ENCODE measurements at regions of chr6 and their contacts with region 1.

Region 1: GRCh38 chr6:154276810-154277628 is 79.6 kb downstream of the IPCEF1 start:
- DNase-seq: peak in 2 of 5 donors; percentile 52 to 57
- H3K4me3 ChIP-seq: peak overlapping the region; percentile 30
- H3K4me3 Mint-ChIP-seq: peak overlapping the region; percentile 54 to 81 (median 76)
- H3K27ac ChIP-seq: no peak overlapping the region
- H3K27ac Mint-ChIP-seq: peak overlapping the region in 6 of 8 donors; percentile 26 to 76 (median 57)
- H3K4me1 ChIP-seq: peaks cover 15% of the 10 kb centered on the region
- H3K4me1 Mint-ChIP-seq: peaks cover 22 to 35% (median 27%) of the 10 kb centered on the region in 3 donors
- H3K27me3 ChIP-seq: no peaks in the 10 kb centered on the region
- H3K27me3 Mint-ChIP-seq: no peaks in the 10 kb centered on the region

Region 2: DNA sequence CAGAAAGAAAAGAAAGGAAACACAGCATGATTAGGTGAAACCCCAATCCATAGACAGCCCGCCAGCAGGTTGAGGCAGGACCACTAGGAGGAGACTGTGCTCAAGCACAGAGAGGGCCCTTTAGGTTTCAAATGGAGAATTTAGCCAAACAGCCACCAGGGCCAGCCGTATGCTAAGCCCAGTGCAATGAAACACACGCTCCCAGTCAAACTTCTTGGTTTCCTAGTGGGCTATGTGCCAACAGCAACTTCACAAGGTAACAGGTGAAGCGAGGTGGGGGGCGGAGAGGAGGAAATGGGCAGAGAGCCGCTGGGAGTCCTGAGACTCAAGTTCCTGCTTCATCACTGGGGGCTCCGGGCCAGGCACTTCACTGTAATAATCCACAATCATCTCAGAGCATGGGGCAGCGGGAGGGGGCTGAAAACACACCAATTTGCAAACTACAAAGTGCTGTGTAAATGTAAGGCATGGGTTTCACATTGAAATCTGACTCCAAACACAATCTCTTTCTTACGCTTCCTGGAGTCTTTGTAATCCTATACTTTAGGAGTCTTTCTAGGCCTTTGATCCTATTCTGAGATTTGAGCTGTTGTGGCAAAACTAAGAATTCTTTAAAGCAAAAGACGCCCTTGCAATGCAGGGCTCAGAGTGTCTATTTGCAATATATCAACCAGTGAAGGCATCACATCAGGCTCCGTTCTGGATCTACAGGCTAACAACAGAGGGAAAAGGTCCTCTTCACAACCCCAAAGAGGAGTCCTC is 120.7 kb before region 1 on chr6:
- CTCF ChIA-PET with region 1: interaction called, 69 read pairs
- POLR2A ChIA-PET with region 1: interaction called, 6 read pairs
- DNase-seq: peak; percentile 36 to 75 (median 43)
- H3K4me3 ChIP-seq: peak overlapping the region; percentile 61
- H3K4me3 Mint-ChIP-seq: peak overlapping the region; percentile 66 to 91 (median 84)
- H3K27ac ChIP-seq: no peak overlapping the region
- H3K27ac Mint-ChIP-seq: peak overlapping the region; percentile 83 to 98 (median 92)
- H3K4me1 ChIP-seq: peaks cover 40% of the 10 kb centered on the region
- H3K4me1 Mint-ChIP-seq: peaks cover 57 to 65% (median 63%) of the 10 kb centered on the region in 3 donors
- H3K27me3 ChIP-seq: no peaks in the 10 kb centered on the region
- H3K27me3 Mint-ChIP-seq: no peaks in the 10 kb centered on the region

Region 3: GRCh38 chr6:154164397-154165165 is 112.4 kb before region 1 on chr6:
- CTCF ChIA-PET with region 1: interaction called, 42 read pairs
- POLR2A ChIA-PET with region 1: interaction called, 3 read pairs
- DNase-seq: peak in 1 of 5 donors; percentile 27
- H3K4me3 ChIP-seq: no peak overlapping the region
- H3K4me3 Mint-ChIP-seq: peak overlapping the region in 1 of 7 donors; percentile 18
- H3K27ac ChIP-seq: no peak overlapping the region
- H3K27ac Mint-ChIP-seq: peak overlapping the region; percentile 10 to 87 (median 62)
- H3K4me1 ChIP-seq: peaks cover 24% of the 10 kb centered on the region
- H3K4me1 Mint-ChIP-seq: peaks cover 39 to 56% (median 41%) of the 10 kb centered on the region in 3 donors
- H3K27me3 ChIP-seq: no peaks in the 10 kb centered on the region
- H3K27me3 Mint-ChIP-seq: no peaks in the 10 kb centered on the region

Region 4: GRCh38 chr6:154179434-154179833 is 97.6 kb before region 1 on chr6:
- CTCF ChIA-PET with region 1: no interaction called
- POLR2A ChIA-PET with region 1: no interaction called
- DNase-seq: no peak
- H3K4me3 ChIP-seq: no peak overlapping the region
- H3K4me3 Mint-ChIP-seq: peak overlapping the region in 2 of 7 donors; percentile 1 to 12
- H3K27ac ChIP-seq: no peak overlapping the region
- H3K27ac Mint-ChIP-seq: peak overlapping the region in 5 of 8 donors; percentile 7 to 70 (median 58)
- H3K4me1 ChIP-seq: no peaks in the 10 kb centered on the region
- H3K4me1 Mint-ChIP-seq: peaks cover 57 to 88% (median 84%) of the 10 kb centered on the region in 3 donors
- H3K27me3 ChIP-seq: no peaks in the 10 kb centered on the region
- H3K27me3 Mint-ChIP-seq: no peaks in the 10 kb centered on the region

Region 5: GRCh38 chr6:154229786-154230185 is 47.2 kb before region 1 on chr6:
- CTCF ChIA-PET with region 1: interaction called, 19 read pairs
- POLR2A ChIA-PET with region 1: no interaction called
- DNase-seq: peak in 4 of 5 donors; percentile 26 to 54 (median 39)
- H3K4me3 ChIP-seq: peak overlapping the region; percentile 19
- H3K4me3 Mint-ChIP-seq: peak overlapping the region; percentile 82 to 89 (median 84)
- H3K27ac ChIP-seq: peak overlapping the region; percentile 15
- H3K27ac Mint-ChIP-seq: peak overlapping the region; percentile 76 to 97 (median 92)
- H3K4me1 ChIP-seq: peaks cover 77% of the 10 kb centered on the region
- H3K4me1 Mint-ChIP-seq: peaks cover 80 to 88% (median 84%) of the 10 kb centered on the region in 3 donors
- H3K27me3 ChIP-seq: no peaks in the 10 kb centered on the region
- H3K27me3 Mint-ChIP-seq: no peaks in the 10 kb centered on the region

Region 6: GRCh38 chr6:154239392-154239791 is 37.6 kb before region 1 on chr6:
- CTCF ChIA-PET with region 1: interaction called, 19 read pairs
- POLR2A ChIA-PET with region 1: no interaction called
- DNase-seq: peak in 1 of 5 donors; percentile 15
- H3K4me3 ChIP-seq: no peak overlapping the region
- H3K4me3 Mint-ChIP-seq: peak overlapping the region; percentile 47 to 80 (median 72)
- H3K27ac ChIP-seq: no peak overlapping the region
- H3K27ac Mint-ChIP-seq: peak overlapping the region in 7 of 8 donors; percentile 10 to 92 (median 68)
- H3K4me1 ChIP-seq: peaks cover 84% of the 10 kb centered on the region
- H3K4me1 Mint-ChIP-seq: peaks cover 78 to 95% (median 91%) of the 10 kb centered on the region in 3 donors
- H3K27me3 ChIP-seq: no peaks in the 10 kb centered on the region
- H3K27me3 Mint-ChIP-seq: no peaks in the 10 kb centered on the region

Region 7: GRCh38 chr6:154247119-154247861 is 29.7 kb before region 1 on chr6:
- CTCF ChIA-PET with region 1: interaction called, 24 read pairs
- POLR2A ChIA-PET with region 1: interaction called, 8 read pairs
- DNase-seq: peak in 4 of 5 donors; percentile 20 to 60 (median 56)
- H3K4me3 ChIP-seq: peak overlapping the region; percentile 87
- H3K4me3 Mint-ChIP-seq: peak overlapping the region; percentile 91 to 99 (median 95)
- H3K27ac ChIP-seq: peak overlapping the region; percentile 72
- H3K27ac Mint-ChIP-seq: peak overlapping the region; percentile 93 to 98 (median 95)
- H3K4me1 ChIP-seq: peaks cover 68% of the 10 kb centered on the region
- H3K4me1 Mint-ChIP-seq: peaks cover 72 to 88% (median 80%) of the 10 kb centered on the region in 3 donors
- H3K27me3 ChIP-seq: no peaks in the 10 kb centered on the region
- H3K27me3 Mint-ChIP-seq: no peaks in the 10 kb centered on the region

Region 8: GRCh38 chr6:154266560-154267099 is 10.4 kb before region 1 on chr6:
- CTCF ChIA-PET with region 1: interaction called, 11 read pairs
- POLR2A ChIA-PET with region 1: no interaction called
- DNase-seq: no peak
- H3K4me3 ChIP-seq: no peak overlapping the region
- H3K4me3 Mint-ChIP-seq: peak overlapping the region in 2 of 7 donors; percentile 46 to 47
- H3K27ac ChIP-seq: no peak overlapping the region
- H3K27ac Mint-ChIP-seq: peak overlapping the region in 2 of 8 donors; percentile 22 to 46
- H3K4me1 ChIP-seq: peaks cover 18% of the 10 kb centered on the region
- H3K4me1 Mint-ChIP-seq: peaks cover 18 to 47% (median 32%) of the 10 kb centered on the region in 3 donors
- H3K27me3 ChIP-seq: no peaks in the 10 kb centered on the region
- H3K27me3 Mint-ChIP-seq: no peaks in the 10 kb centered on the region

Measured in CD8-positive, alpha-beta memory T cell (primary cell).